ENCODE measurements at regions of chr18 and their contacts with region 1.

Region 1: DNA sequence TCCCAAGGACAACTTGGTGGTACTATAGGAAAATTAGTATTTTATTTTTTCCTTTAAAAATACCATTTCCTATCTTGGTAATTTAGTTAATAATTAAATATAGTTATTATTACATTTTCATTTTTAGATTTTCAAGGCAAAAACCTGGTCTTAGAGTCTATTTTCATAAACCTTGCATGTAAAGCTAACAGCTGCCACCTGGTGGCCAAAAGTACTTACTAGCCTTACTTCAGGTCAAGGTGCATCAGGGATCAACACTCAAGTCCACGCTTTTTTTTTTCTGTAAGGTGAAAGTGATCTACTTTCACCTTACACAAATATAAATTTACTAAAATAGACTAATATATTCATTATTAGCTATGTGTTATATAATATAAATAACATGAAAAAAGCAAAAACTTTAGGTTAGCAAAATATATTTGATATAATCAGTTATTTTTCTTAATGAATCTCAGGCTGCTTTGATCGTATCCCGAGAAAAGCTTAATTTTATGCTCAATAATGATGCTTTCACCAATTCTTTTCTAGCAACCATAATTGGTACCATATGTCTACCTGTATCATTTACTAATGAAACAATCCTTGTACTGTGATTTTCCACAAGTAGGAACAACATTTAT is 62.5 kb downstream of the RELCH start:
- DNase-seq: peak; percentile 44 to 80 (median 51)
- ATAC-seq: no peak
- H3K4me3 ChIP-seq: no peak overlapping the region
- H3K27ac ChIP-seq: no peak overlapping the region
- H3K4me1 ChIP-seq: peaks cover 0 to 3% (median 0%) of the 10 kb centered on the region in 12 donors
- H3K27me3 ChIP-seq: no peaks in the 10 kb centered on the region
- CTCF ChIP-seq: peak; percentile 68 to 88 (median 80)
- POLR2A ChIP-seq: no peak

Region 2: DNA sequence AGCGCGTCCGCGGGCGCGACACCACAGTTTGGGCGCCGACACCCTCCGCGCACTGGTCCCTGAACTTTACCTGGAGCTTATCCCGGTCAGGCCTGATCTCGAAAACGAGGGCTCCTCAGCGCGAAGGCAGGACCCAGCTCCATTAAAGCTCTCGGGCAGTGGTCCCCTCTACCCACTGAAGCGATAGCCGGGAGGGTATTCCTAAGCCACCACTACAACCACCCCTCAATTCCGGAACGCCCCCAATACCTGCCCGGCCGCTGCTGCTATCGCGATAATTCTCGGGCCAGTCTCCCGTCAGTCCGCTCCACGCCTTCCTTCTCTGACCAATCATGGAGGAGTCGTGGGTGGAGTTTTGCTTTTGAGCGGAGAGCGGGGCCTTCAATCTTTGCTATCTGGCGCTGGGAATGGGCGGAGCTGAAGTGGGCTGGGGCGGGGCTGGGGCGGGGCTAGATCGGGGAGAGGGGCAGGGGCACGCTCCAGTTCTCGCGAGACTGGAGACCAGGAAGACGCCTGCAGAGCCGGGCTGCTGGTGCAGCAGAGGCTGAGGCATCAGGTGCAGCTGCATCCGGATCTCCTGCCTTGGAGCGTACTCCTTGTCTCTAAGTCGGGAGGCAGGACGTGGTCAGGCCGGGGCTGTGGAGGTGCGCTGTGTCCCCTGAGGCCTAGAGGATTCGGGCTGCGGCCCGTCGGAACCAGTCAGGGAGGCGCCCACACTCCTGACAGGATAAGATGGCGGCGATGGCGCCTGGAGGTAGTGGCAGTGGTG is 62.6 kb before region 1 on chr18 and contains the starts of genes PIGN and RELCH:
- intact Hi-C with region 1: loop called (anchors 1 to 5 kb)
- DNase-seq: peak; percentile 93 to 97 (median 96)
- ATAC-seq: peak; percentile 99 to 100 (median 99)
- H3K4me3 ChIP-seq: peak within 1 kb of the TSS; percentile 66 to 100 (median 90)
- H3K27ac ChIP-seq: peak within 1 kb of the TSS; percentile 37 to 87 (median 81)
- H3K4me1 ChIP-seq: peaks cover 0 to 51% (median 35%) of the 10 kb centered on the region in 12 donors
- H3K27me3 ChIP-seq: no peaks in the 10 kb centered on the region
- CTCF ChIP-seq: no peak
- POLR2A ChIP-seq: peak in 1 of 2 donors; percentile 74
- total RNA-seq, gene PIGN: 16.6 to 29.6 (median 23.3) TPM
- total RNA-seq, gene RELCH: 11.6 to 24.8 (median 15.2) TPM